B cell (primary cell): ENCODE measurements at regions of chr17 and their contacts with region 1.

Region 1: DNA sequence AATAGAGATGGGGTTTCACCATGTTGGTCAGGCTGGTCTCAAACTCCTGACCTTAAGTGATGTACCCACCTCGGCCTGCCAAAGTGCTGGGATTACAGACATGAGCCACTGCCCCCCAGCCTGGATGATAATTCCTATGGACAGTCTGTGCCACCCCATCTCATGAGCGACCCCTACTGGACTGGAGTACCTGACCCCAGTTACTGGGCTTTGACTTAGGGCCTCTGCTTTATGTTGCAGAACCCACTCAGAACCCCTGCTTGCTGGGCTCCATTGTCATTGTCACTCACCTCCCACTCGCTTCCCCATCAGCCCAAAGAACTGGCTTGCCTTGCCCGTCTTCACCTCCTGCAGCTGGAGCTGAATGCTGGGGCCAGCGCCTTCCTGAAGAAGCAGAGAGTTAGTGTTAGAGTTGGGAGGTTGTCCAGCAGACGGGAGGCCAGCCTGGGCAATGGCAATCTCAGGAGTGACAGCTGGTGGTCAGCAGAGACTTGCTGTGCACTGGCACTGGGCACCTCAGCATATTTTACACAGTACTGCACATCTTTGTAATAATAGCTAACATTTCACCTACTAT is 4.0 kb downstream of the TAC4 start:
- DNase-seq: no peak
- ATAC-seq: no peak
- H3K4me3 ChIP-seq: no peak overlapping the region
- H3K4me3 Mint-ChIP-seq: no peak overlapping the region
- H3K27ac ChIP-seq: no peak overlapping the region
- H3K27ac Mint-ChIP-seq: no peak overlapping the region
- H3K4me1 ChIP-seq: no peaks in the 10 kb centered on the region
- H3K4me1 Mint-ChIP-seq: no peaks in the 10 kb centered on the region
- H3K27me3 ChIP-seq: no peaks in the 10 kb centered on the region
- H3K27me3 Mint-ChIP-seq: no peaks in the 10 kb centered on the region
- CTCF ChIP-seq: no peak

Region 2: DNA sequence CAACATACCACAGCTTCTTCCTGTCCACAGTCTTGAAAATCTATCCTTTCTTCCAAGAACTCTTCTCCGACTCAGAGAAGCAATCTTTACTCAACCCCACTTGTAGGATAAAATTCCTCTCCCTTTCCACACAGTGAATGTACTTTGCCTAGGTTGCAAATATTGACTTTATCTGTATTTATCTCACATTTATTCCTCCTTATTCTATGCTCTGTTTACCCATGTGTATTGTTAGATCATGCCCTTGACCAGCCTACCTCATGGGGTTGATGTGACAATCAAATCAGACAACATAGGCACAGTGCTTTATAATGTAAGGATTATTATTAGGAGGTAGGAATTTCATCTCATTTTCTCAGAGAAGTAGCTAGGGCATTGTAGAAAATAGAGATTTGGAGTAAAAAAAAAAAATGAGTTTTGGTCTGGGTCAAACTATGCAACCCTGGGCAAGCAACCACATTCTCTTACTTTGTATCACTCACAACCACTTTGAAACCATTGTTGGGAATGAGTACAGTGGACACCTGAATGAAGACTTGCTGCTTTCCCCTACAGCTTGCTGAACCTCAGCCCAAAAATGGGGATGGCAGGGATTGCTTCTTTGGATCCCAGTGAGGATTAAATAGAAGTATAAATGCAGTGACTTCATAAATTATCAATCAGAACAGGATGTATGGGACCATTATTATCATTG is 127.0 kb before region 1 on chr17:
- CTCF ChIA-PET with region 1: no interaction called
- POLR2A ChIA-PET with region 1: interaction called, 11 read pairs
- intact Hi-C with region 1: no loop called
- DNase-seq: no peak
- ATAC-seq: no peak
- H3K4me3 ChIP-seq: no peak overlapping the region
- H3K4me3 Mint-ChIP-seq: no peak overlapping the region
- H3K27ac ChIP-seq: no peak overlapping the region
- H3K27ac Mint-ChIP-seq: peak overlapping the region; percentile 16
- H3K4me1 ChIP-seq: peaks cover 10% of the 10 kb centered on the region in 2 donors
- H3K4me1 Mint-ChIP-seq: peaks cover 16% of the 10 kb centered on the region
- H3K27me3 ChIP-seq: no peaks in the 10 kb centered on the region
- H3K27me3 Mint-ChIP-seq: no peaks in the 10 kb centered on the region
- CTCF ChIP-seq: no peak

Region 3: GRCh38 chr17:49880291-49881053 is 36.6 kb after region 1 on chr17:
- CTCF ChIA-PET with region 1: no interaction called
- POLR2A ChIA-PET with region 1: no interaction called
- intact Hi-C with region 1: no loop called
- DNase-seq: peak; percentile 78
- ATAC-seq: peak; percentile 95
- H3K4me3 ChIP-seq: peak overlapping the region in 2 of 5 experiments; percentile 9 to 16
- H3K4me3 Mint-ChIP-seq: peak overlapping the region; percentile 56
- H3K27ac ChIP-seq: no peak overlapping the region
- H3K27ac Mint-ChIP-seq: no peak overlapping the region
- H3K4me1 ChIP-seq: peaks cover 9 to 10% of the 10 kb centered on the region in 2 donors
- H3K4me1 Mint-ChIP-seq: peaks cover 6% of the 10 kb centered on the region
- H3K27me3 ChIP-seq: peaks cover 0 to 46% (median 18%) of the 10 kb centered on the region in 4 experiments
- H3K27me3 Mint-ChIP-seq: peaks cover 53% of the 10 kb centered on the region
- CTCF ChIP-seq: peak; percentile 97

Region 4: DNA sequence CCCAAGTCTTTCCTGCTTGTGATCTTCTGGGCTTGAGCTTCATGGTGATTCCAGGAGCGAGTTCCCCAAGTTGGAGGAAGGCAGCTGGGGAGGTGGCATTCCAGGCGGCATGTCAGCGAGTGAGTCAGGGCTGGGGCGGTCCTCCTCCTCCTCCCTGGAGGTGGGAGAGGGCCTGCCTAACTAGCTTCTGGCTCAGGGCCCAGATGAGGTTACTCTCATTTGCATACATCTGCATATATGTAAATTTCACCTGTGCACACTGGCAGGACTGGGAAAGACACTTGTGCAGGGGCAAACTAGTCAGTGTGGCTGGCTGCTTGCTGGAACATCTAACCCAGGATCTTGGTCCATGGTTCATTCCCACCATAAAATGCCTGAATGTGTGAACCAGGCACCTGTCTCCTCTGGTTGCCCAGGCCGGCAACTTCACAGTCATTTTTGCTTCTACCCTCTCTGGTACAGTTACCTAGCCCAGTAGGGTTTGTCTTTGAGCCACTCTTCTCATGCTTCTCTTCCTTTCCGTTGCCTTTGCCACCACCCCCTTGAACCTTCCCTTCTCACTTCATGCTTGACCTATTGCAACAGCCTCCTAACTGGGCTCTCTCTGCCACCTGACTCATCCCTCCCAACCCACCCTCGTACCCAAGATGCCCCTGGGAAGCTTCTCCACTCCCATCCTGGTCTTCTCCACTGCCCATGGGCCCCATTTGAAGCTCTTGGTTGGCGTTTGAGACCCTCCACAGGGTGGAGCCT is 115.5 kb after region 1 on chr17:
- CTCF ChIA-PET with region 1: no interaction called
- POLR2A ChIA-PET with region 1: no interaction called
- intact Hi-C with region 1: no loop called
- DNase-seq: no peak
- ATAC-seq: no peak
- H3K4me3 ChIP-seq: no peak overlapping the region
- H3K4me3 Mint-ChIP-seq: no peak overlapping the region
- H3K27ac ChIP-seq: no peak overlapping the region
- H3K27ac Mint-ChIP-seq: no peak overlapping the region
- H3K4me1 ChIP-seq: peaks cover 13 to 18% of the 10 kb centered on the region in 2 donors
- H3K4me1 Mint-ChIP-seq: peaks cover 9% of the 10 kb centered on the region
- H3K27me3 ChIP-seq: peaks cover 0 to 33% (median 23%) of the 10 kb centered on the region in 4 experiments
- H3K27me3 Mint-ChIP-seq: peaks cover 39% of the 10 kb centered on the region
- CTCF ChIP-seq: no peak